GM12878 (cell line): ENCODE measurements at regions of chr12 and their contacts with region 1.

Region 1: DNA sequence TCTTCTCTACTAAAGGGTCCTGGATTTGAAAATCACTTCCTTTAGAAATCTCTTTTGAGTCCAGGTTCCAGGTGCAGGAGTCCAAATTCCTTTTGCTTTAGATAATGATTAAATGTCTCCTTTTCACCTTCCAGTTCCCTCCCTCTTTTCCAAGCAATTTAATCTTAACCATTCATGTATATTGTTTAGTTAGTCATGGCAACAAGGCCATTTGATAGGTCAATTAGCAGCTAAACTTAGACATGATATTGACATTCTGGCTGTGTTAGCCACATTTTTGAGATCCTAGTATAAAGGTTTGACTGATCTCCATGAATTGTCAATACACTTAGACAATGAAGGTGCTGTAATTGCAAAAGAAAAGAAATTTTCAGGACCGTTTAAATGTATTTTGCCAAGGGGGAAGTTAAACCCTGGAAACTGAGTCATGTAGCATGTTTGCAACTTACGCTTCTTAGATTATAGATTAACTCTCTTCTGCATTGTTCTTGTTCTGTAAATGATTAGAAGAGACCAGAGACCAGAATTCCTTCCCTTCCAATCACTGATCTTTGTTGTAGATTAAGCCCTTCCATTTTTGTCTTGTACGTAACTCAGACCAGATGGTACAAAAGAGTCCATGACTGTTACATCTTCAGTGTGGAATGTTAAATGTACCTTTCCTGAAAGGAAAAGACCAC is 12.4 kb upstream of the C12orf75 start:
- DNase-seq: no peak
- ATAC-seq: no peak
- H3K4me3 ChIP-seq: no peak overlapping the region
- H3K27ac ChIP-seq: no peak overlapping the region
- H3K4me1 ChIP-seq: no peaks in the 10 kb centered on the region
- H3K27me3 ChIP-seq: no peaks in the 10 kb centered on the region
- CTCF ChIP-seq: no peak
- EP300 ChIP-seq: no peak
- POLR2A ChIP-seq: no peak
- RAD21 ChIP-seq: no peak

Region 2: GRCh38 chr12:105226219-105226618 is 91.9 kb before region 1 on chr12:
- CTCF ChIA-PET with region 1: no interaction called
- POLR2A ChIA-PET with region 1: no interaction called
- RAD21 ChIA-PET with region 1: no interaction called
- SMC1A ChIA-PET with region 1: no interaction called
- in situ Hi-C with region 1: no loop called
- intact Hi-C with region 1: no loop called
- DNase-seq: no peak
- ATAC-seq: peak; percentile 36; the same call in 1 of the 3 replicates
- H3K4me3 ChIP-seq: peak overlapping the region; percentile 20; the same call in 1 of the 2 replicates
- H3K27ac ChIP-seq: no peak overlapping the region
- H3K4me1 ChIP-seq: peaks cover 5% of the 10 kb centered on the region; the same call in 1 of the 2 replicates
- H3K27me3 ChIP-seq: no peaks in the 10 kb centered on the region
- CTCF ChIP-seq: no peak
- EP300 ChIP-seq: no peak
- POLR2A ChIP-seq: no peak
- RAD21 ChIP-seq: no peak

Region 3: DNA sequence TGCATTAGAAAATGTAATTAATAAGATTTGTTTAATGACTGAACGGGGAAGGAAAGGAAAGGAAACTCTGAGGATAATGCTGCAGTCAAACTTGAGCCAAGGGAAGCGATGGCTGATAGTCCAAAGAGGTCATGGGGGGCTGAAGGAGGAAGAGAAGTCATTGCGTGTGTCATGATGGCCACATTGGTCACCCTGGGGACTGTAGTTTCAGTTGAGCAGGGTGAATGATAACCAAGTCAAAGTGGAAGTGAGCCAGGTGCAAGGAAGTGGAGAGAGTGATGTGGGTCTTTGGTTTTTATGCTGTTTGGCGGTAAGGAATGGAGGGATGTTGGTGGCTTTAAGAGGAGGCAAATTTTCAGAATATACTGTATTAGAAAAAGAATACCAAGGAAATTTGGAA is 34.0 kb after region 1 on chr12:
- CTCF ChIA-PET with region 1: interaction called, 10 read pairs
- POLR2A ChIA-PET with region 1: interaction called, 7 read pairs
- RAD21 ChIA-PET with region 1: interaction called, 5 read pairs
- SMC1A ChIA-PET with region 1: interaction called, 12 read pairs
- in situ Hi-C with region 1: no loop called
- intact Hi-C with region 1: no loop called
- DNase-seq: peak; percentile 72
- ATAC-seq: peak; percentile 91
- H3K4me3 ChIP-seq: 0 out of 2 replicates have a peak overlapping the region, but pooled peaks have one; percentile 13
- H3K27ac ChIP-seq: peak overlapping the region; percentile 62
- H3K4me1 ChIP-seq: peaks cover 28% of the 10 kb centered on the region
- H3K27me3 ChIP-seq: no peaks in the 10 kb centered on the region
- CTCF ChIP-seq: no peak
- EP300 ChIP-seq: peak; percentile 66 to 78; a peak in 3 of 4 replicates
- POLR2A ChIP-seq: no peak
- RAD21 ChIP-seq: no peak

Region 4: DNA sequence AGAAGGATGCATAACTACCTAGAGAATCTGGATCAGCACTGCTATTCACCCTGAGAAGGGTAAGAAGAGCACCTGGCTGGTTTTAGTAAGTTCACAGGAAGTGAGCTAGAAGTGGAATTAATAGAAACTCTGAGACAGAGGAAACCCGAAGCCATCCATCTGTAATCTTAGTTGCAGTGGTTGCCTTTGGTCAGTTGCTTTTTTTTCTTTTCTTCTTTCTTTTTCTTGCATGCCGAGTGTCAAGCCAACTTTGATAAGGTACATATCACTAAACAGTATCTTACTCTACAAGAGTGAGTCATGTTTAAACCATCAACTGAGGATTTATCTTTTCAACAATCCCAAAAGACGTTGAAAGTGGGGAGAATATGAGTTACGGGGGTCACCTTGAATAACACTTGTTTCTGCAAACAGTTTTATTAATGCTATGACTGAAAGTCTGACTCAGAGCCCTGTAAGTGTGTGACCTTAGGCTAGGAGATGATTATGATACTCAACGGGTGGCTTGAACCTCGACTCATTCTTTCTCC is 39.1 kb after region 1 on chr12:
- CTCF ChIA-PET with region 1: interaction called, 7 read pairs
- POLR2A ChIA-PET with region 1: interaction called, 7 read pairs
- RAD21 ChIA-PET with region 1: interaction called, 5 read pairs
- SMC1A ChIA-PET with region 1: interaction called, 12 read pairs
- in situ Hi-C with region 1: no loop called
- intact Hi-C with region 1: no loop called
- DNase-seq: peak; percentile 45
- ATAC-seq: peak; percentile 84
- H3K4me3 ChIP-seq: peak overlapping the region; percentile 42; the same call in 1 of the 2 replicates
- H3K27ac ChIP-seq: peak overlapping the region; percentile 67
- H3K4me1 ChIP-seq: peaks cover 32% of the 10 kb centered on the region
- H3K27me3 ChIP-seq: no peaks in the 10 kb centered on the region
- CTCF ChIP-seq: no peak
- EP300 ChIP-seq: peak in 1 of 2 experiments; percentile 67; a peak in 2 of 4 replicates
- POLR2A ChIP-seq: no peak
- RAD21 ChIP-seq: no peak

Region 5: DNA sequence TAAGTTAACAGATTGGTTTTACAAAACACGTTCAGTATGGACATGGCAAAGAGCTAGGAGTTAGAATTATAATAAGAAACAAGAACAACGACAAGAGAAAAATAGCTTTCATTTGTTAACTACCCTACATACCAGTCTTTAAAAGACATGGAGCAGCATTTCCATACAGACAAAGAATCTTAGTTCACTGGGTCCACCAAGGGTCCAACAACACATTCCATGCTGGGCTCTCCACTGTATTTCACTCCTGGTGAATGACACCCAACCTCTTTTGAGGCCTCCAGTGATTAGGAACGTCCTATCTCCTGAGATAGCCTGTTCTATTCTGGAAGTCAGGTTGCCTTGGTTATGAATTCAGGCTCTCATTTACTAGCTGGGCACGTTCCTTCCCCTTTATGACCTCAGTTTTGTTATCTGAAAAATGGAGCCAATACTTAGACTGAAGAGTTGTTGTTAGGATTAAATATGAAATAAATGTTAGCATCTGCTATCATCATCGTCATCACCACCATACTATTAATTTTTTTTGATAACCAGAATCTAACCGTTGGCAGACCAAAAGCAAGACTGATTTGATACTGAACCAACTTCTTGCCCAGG is 50.1 kb after region 1 on chr12:
- CTCF ChIA-PET with region 1: interaction called, 10 read pairs
- POLR2A ChIA-PET with region 1: no interaction called
- RAD21 ChIA-PET with region 1: interaction called, 7 read pairs
- SMC1A ChIA-PET with region 1: interaction called, 6 read pairs
- in situ Hi-C with region 1: no loop called
- intact Hi-C with region 1: no loop called
- DNase-seq: no peak
- ATAC-seq: no peak
- H3K4me3 ChIP-seq: no peak overlapping the region
- H3K27ac ChIP-seq: no peak overlapping the region
- H3K4me1 ChIP-seq: no peaks in the 10 kb centered on the region
- H3K27me3 ChIP-seq: no peaks in the 10 kb centered on the region
- CTCF ChIP-seq: no peak
- EP300 ChIP-seq: no peak
- POLR2A ChIP-seq: no peak
- RAD21 ChIP-seq: no peak

Region 6: GRCh38 chr12:105382771-105383622 is 64.9 kb after region 1 on chr12:
- CTCF ChIA-PET with region 1: interaction called, 43 read pairs
- POLR2A ChIA-PET with region 1: no interaction called
- RAD21 ChIA-PET with region 1: interaction called, 10 read pairs
- SMC1A ChIA-PET with region 1: interaction called, 26 read pairs
- in situ Hi-C with region 1: no loop called
- intact Hi-C with region 1: loop called (anchors 2 kb)
- DNase-seq: peak; percentile 17
- ATAC-seq: peak; percentile 76
- H3K4me3 ChIP-seq: no peak overlapping the region
- H3K27ac ChIP-seq: no peak overlapping the region
- H3K4me1 ChIP-seq: no peaks in the 10 kb centered on the region
- H3K27me3 ChIP-seq: no peaks in the 10 kb centered on the region
- CTCF ChIP-seq: peak; percentile 65 to 82 (median 82)
- EP300 ChIP-seq: no peak
- POLR2A ChIP-seq: no peak
- RAD21 ChIP-seq: peak; percentile 96